ENCODE measurements at regions of chr1 and their contacts with region 1.

Region 1: DNA sequence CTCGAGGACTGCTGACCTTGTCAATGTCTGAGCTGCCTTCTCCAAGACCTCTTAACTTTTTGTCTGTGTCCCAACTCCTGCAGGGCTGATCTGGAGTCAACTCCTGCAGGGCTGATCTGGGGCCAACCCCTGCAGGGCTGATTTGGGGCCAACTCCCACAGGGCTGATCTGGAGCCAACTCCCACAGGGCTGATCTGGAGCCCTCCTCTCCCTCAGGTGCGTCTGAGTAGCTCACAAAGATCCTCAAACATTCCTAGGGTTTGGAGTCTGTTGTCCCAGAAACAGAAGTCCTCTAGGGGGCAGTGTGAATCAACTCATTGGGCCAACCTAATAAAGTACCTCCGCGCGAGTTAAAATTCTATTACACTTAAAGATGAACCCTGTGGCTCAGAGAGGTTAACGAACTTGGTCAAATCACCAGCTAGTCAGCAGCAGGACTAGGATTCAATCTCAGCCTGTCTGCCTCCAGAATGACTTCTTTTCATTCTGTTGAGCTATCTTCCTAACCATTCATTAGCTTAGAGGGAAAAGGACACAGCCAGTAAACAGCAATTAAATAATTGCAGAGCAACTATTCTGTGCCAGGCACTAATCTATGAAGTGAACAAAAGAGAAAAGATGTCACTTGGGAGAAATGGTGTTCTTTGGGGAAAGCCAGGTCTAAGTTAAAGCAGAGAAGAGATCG is 17.2 kb upstream of the RLF start:
- DNase-seq: no peak
- H3K4me3 ChIP-seq: no peak overlapping the region
- H3K27me3 ChIP-seq: peaks cover 9% of the 10 kb centered on the region
- CTCF ChIP-seq: peak; percentile 81

Region 2: DNA sequence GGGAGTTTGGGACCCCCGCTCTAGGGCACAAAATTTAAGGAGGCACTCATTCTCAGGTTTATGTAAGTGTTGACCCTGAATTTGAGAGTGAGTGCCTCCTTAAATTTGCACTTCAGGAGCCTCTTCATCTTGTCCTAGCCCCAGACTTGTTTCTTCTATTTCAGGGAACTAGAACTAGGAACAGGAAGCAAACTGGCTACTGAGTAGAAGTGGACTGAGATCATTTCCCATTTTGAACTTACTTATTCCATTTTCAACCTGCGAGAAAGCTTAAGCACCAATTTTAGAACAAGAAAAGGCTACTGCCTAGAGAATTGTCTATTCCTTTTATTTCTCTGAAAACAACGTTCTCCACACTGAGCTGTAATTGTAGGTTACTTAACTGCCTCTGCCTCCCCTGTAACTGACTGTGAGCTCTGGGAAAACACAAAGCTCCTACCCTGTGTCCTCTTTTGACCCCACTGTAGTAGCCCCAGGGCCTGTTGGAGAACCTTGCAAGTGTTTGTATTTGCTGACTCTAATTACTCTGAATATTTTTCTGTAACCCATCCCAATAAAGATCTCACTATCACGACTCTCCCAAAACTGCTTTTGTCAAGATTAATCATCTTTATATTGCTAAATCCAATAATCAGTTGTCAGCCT is 49.4 kb before region 1 on chr1:
- CTCF ChIA-PET with region 1: interaction called, 20 read pairs
- POLR2A ChIA-PET with region 1: no interaction called
- DNase-seq: no peak
- H3K4me3 ChIP-seq: no peak overlapping the region
- H3K27me3 ChIP-seq: no peaks in the 10 kb centered on the region
- CTCF ChIP-seq: no peak

Region 3: DNA sequence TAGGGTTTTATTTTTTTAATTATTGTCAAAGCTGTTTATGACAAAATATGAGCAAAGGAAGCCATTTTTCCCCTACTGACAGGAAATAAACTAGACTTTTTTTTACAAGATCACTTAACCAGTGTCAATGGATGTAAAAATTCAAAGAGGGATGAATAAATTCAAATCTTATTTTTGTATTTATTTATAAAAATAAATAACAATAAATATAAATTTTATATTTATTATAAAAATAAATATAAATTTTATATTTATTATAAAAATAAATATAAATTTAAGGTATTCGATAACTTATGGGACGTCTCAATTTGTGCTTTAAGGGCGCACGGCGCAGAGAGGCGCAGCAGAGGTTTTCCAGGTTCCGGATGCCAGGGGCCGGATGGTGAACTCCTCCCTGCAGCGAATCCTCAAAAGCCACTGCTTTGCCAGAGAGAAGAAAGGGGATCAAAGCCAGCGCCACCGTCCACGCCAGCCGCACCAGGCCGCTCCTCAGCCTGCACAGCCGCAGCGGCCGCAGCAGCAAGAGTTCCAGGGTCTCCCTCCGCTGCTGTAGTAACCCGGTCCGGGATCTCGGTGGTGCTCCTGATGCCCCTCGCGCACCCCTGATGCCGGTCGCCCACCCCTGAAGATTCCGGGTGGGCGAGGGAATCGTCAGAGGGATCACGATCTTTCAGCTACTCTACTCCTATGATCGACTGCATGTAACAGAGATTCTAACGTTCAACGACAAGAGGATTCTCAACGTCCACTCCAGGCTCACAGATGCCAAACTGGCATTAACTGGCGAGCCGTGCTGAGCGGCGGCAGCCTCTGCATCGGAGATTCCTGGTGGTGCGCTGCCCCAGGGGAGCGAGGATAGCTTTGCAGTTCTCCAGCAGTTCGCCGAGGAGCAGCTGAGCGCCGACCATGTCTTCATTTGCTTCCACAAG is 11.4 kb before region 1 on chr1:
- CTCF ChIA-PET with region 1: interaction called, 13 read pairs
- POLR2A ChIA-PET with region 1: no interaction called
- DNase-seq: no peak
- H3K4me3 ChIP-seq: peak overlapping the region; percentile 31
- H3K27me3 ChIP-seq: peaks cover 8% of the 10 kb centered on the region
- CTCF ChIP-seq: no peak

Region 4: DNA sequence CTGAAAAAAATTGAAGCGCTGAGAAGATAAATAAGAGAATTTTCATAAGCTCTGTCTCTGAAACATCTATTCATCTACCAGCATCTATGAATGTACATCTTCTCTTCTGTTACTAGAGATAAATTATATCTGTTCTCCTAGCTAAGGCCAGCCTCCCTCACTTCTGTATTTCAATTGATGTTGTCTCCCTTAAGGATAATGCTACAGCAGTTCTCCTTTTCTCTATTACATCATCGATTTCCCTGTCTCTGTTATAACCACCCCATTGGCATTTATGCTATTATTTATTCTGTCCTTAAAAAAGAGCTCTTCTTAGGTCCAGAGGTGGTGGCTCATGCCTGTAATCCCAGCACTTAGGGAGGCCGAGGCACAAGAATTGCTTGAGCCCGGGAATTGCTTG is 60.8 kb after region 1 on chr1:
- CTCF ChIA-PET with region 1: no interaction called
- POLR2A ChIA-PET with region 1: no interaction called
- DNase-seq: no peak
- H3K4me3 ChIP-seq: no peak overlapping the region
- H3K27me3 ChIP-seq: no peaks in the 10 kb centered on the region
- CTCF ChIP-seq: no peak

Region 5: GRCh38 chr1:40232444-40232843 is 88.4 kb after region 1 on chr1:
- CTCF ChIA-PET with region 1: no interaction called
- POLR2A ChIA-PET with region 1: no interaction called
- DNase-seq: no peak
- H3K4me3 ChIP-seq: no peak overlapping the region
- H3K27me3 ChIP-seq: no peaks in the 10 kb centered on the region
- CTCF ChIP-seq: no peak

Region 6: GRCh38 chr1:40404670-40405462 is 260.8 kb after region 1 on chr1:
- CTCF ChIA-PET with region 1: interaction called, 34 read pairs
- POLR2A ChIA-PET with region 1: no interaction called
- DNase-seq: no peak
- H3K4me3 ChIP-seq: no peak overlapping the region
- H3K27me3 ChIP-seq: no peaks in the 10 kb centered on the region
- CTCF ChIP-seq: peak; percentile 78

Region 7: DNA sequence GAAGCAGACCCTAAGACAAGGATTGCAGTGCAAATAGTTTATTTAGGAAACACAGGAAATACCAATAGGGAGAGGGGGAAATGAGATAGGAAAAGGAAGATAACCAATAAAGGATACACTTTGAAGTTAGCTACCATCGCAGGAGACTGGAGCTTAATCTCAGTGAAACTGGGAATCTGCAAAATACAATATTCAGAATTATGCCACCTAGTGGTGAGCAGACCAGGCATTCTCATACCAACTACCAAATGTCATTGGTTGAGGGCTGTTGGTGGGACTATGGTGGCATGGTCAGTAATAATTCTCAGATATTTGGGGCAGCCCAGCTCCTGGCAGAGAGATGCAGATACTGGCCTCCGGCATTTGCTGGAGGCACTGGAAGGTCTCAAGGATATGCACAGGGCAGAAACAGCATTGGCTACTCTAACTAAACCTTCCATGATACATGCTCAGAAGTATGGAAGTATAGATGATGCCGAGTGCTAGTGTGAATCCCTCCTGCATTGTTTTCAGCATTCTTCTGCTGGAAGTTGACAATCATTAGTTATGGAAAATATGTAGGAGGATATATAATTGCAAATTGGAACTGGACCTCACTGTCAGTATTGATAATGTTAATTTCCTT is 294.5 kb after region 1 on chr1:
- CTCF ChIA-PET with region 1: interaction called, 11 read pairs
- POLR2A ChIA-PET with region 1: no interaction called
- DNase-seq: no peak
- H3K4me3 ChIP-seq: no peak overlapping the region
- H3K27me3 ChIP-seq: no peaks in the 10 kb centered on the region
- CTCF ChIP-seq: peak; percentile 67

Measured in BJ (cell line).